ENCODE measurements at regions of chr4 and their contacts with region 1.

Region 1: GRCh38 chr4:151882072-151882803 is 121.4 kb upstream of the GATB start:
- DNase-seq: no peak
- ATAC-seq: peak; percentile 83
- H3K4me3 Mint-ChIP-seq: no peak overlapping the region
- H3K27ac Mint-ChIP-seq: peak overlapping the region; percentile 88
- H3K4me1 Mint-ChIP-seq: peaks cover 38% of the 10 kb centered on the region
- H3K27me3 Mint-ChIP-seq: no peaks in the 10 kb centered on the region

Region 2: DNA sequence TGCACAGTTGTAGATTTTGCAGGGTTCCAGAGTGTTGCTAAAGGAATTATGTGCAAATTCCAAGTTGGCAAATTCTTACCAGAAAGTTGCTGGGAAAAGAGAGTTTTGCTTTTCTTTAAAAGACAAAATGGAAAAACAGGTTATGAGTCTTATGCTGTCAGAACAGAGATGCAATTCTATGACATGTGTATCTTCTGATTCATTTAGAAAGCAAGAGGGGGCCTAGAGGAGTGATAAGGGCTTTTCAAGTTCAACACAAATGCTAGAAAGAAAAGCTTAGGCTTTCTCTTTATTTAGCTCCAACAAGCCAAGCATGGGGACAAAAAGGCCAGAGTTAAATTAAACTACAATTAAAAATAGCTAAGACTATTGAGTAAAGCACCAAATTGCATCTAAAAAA is 49.1 kb before region 1 on chr4:
- CTCF ChIA-PET with region 1: no interaction called
- POLR2A ChIA-PET with region 1: no interaction called
- intact Hi-C with region 1: loop called in 1 of 2 experiments (anchors 1 kb)
- DNase-seq: no peak
- ATAC-seq: peak; percentile 88
- H3K4me3 Mint-ChIP-seq: no peak overlapping the region
- H3K27ac Mint-ChIP-seq: no peak overlapping the region
- H3K4me1 Mint-ChIP-seq: peaks cover 14% of the 10 kb centered on the region
- H3K27me3 Mint-ChIP-seq: peaks cover 2% of the 10 kb centered on the region